Naive thymus-derived CD4-positive, alpha-beta T cell (primary cell): ENCODE measurements at regions of chr2 and their contacts with region 1.

Region 1: DNA sequence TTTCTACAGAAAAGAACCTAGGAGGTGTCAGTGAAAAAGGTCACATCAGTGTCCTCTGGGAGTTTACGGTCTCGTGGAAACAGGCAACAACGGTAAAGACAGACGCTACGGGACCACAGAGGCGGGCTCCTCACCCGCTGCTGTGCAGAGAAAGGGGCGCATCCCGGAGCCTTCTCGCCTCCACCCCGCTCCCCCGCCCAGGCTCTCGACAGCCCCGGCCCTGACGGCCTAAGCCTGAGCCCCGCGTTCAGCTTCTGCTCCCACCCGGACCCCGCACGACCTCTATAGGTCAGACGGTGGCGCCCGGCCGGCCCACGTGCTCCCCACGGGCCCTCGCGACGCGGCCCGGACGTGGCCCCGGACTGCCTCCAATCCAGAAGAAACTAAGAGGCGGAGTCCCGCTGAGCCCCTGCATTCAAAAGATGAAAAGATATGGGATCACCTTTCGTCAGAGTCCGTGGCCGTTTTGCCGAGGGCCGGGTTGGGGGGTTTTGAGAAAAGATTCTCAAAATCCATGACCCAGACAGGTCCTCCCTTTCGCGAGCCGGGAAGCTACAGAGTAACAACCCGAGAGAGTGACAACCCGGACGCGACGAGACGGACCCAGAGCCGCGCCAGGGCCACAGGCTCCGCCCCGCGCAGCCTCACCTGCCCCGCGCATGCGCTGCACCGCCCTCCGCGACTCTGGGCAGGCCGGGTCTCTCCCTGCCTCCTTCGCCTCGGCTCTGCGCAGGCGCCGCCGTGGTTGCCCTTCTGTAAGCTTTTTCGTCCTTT is at the start of gene ZC3H8:
- DNase-seq: peak; percentile 92 to 98 (median 97)
- ATAC-seq: peak; percentile 95
- H3K4me3 ChIP-seq: peak within 1 kb of the TSS; percentile 74
- H3K4me3 Mint-ChIP-seq: peak within 1 kb of the TSS in 9 of 10 donors; percentile 84 to 92 (median 90)
- H3K27ac ChIP-seq: peak within 1 kb of the TSS; percentile 90
- H3K27ac Mint-ChIP-seq: peak within 1 kb of the TSS; percentile 80 to 97 (median 94)
- H3K4me1 ChIP-seq: peaks cover 13 to 19% of the 10 kb centered on the region in 2 donors
- H3K4me1 Mint-ChIP-seq: peaks cover 5 to 32% (median 15%) of the 10 kb centered on the region in 7 donors
- H3K27me3 ChIP-seq: no peaks in the 10 kb centered on the region
- H3K27me3 Mint-ChIP-seq: peaks cover 0 to 3% (median 0%) of the 10 kb centered on the region in 5 donors
- total RNA-seq, gene ZC3H8: 8.8 to 23.6 (median 17.2) TPM

Region 2: DNA sequence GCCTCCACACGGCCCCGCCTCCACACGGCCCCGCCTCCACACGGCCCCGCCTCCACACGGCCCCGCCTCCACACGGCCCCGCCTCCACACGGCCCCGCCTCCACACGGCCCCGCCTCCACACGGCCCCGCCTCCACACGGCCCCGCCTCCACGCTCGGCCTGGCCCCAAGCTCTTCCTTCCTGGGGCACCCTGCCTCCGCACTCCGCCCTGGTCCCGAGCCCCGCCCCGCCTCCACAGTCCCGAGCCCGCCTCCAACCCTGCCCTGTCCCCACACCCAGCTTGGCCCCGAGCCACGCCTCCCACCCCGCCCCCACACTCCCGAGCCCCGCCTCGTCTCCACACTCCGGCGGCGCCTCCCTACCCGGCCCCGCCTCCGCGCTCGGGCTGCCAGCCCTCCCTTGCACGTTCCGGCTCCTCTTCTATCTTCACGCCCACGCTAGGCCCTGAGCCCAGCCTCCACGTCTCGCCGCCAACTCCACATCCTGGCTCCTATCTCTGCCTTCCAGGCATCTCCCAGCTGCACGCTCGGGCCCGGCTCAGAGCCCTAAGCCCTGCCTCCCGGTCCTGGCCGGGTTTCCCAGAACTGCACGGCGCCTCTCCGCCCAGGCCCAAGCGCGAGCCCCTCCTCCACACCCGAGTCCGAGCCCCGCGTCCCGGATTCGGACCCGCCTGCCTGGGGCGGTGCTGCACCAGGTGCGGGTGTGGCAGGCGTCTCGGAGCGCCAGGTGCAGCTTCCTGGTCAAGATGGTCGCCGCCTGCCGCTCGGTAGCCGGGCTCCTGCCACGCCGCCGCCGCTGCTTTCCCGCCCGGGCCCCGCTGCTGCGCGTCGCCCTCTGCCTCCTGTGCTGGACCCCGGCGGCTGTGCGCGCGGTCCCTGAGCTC is 199.6 kb before region 1 on chr2 and contains the start of gene TMEM87B:
- CTCF ChIA-PET with region 1: no interaction called
- POLR2A ChIA-PET with region 1: interaction called, 8 read pairs
- intact Hi-C with region 1: loop called (anchors 1 kb)
- DNase-seq: peak; percentile 90 to 98 (median 96)
- ATAC-seq: peak; percentile 80
- H3K4me3 ChIP-seq: peak within 1 kb of the TSS; percentile 85
- H3K4me3 Mint-ChIP-seq: peak within 1 kb of the TSS; percentile 80 to 100 (median 95)
- H3K27ac ChIP-seq: peak within 1 kb of the TSS; percentile 82
- H3K27ac Mint-ChIP-seq: peak within 1 kb of the TSS; percentile 92 to 100 (median 98)
- H3K4me1 ChIP-seq: peaks cover 16 to 19% of the 10 kb centered on the region in 2 donors
- H3K4me1 Mint-ChIP-seq: peaks cover 33 to 48% (median 42%) of the 10 kb centered on the region in 7 donors
- H3K27me3 ChIP-seq: no peaks in the 10 kb centered on the region
- H3K27me3 Mint-ChIP-seq: peaks cover 0 to 2% (median 0%) of the 10 kb centered on the region in 5 donors
- total RNA-seq, gene TMEM87B: 14.0 to 26.9 (median 17.4) TPM

Region 3: DNA sequence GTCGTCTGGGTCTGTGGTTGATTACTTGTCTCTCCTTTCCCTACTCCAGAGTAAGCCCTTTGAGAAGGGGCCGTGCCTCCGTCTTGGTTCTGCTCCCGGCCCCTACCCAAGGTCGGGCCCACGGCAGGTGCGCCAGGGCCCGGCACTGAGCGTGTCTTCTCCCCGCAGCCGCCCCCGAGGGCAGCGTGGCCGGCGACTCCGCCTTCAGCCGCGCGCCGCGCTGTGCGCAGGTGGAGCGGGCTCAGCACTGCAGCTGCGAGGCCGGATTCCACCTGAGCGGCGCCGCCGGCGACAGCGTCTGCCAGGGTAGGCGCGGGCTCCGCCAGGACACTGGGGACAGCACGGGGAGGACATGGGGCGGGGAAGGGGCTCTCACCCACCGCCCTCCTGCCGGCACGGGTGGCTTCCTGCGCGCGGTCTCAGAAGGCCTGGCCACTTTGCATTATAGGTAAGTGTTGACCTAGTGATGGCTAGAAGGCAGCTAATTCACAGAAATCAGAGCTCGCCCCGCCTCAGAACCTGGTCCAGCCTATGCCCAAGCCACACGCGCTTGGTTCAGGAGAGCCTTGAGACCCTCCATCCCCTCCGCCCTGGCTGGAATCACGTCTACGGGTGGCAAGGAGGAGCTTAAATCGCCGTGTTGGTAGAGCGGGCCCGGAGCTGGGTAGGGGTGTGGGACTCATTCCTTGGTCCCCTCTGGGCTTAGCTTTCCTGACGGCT is 72.9 kb before region 1 on chr2:
- CTCF ChIA-PET with region 1: interaction called, 4 read pairs
- POLR2A ChIA-PET with region 1: interaction called, 69 read pairs
- intact Hi-C with region 1: loop called in 1 of 2 experiments (anchors 1 kb)
- DNase-seq: peak; percentile 53 to 76 (median 71)
- ATAC-seq: peak; percentile 89
- H3K4me3 ChIP-seq: peak overlapping the region; percentile 71
- H3K4me3 Mint-ChIP-seq: peak overlapping the region; percentile 85 to 94 (median 90)
- H3K27ac ChIP-seq: peak overlapping the region; percentile 89
- H3K27ac Mint-ChIP-seq: peak overlapping the region; percentile 87 to 99 (median 96)
- H3K4me1 ChIP-seq: peaks cover 0 to 32% of the 10 kb centered on the region in 2 donors
- H3K4me1 Mint-ChIP-seq: peaks cover 28 to 71% (median 63%) of the 10 kb centered on the region in 7 donors
- H3K27me3 ChIP-seq: no peaks in the 10 kb centered on the region
- H3K27me3 Mint-ChIP-seq: peaks cover 0 to 11% (median 0%) of the 10 kb centered on the region in 5 donors

Region 4: GRCh38 chr2:112242384-112242783 is 12.3 kb before region 1 on chr2:
- CTCF ChIA-PET with region 1: no interaction called
- POLR2A ChIA-PET with region 1: interaction called, 12 read pairs
- intact Hi-C with region 1: loop called in 1 of 2 experiments (anchors 1 kb)
- DNase-seq: peak in 6 of 9 donors; percentile 14 to 39 (median 30)
- ATAC-seq: peak; percentile 53
- H3K4me3 ChIP-seq: no peak overlapping the region
- H3K4me3 Mint-ChIP-seq: peak overlapping the region in 8 of 10 donors; percentile 41 to 76 (median 60)
- H3K27ac ChIP-seq: peak overlapping the region; percentile 34
- H3K27ac Mint-ChIP-seq: peak overlapping the region in 8 of 9 donors; percentile 59 to 85 (median 76)
- H3K4me1 ChIP-seq: peaks cover 0 to 23% of the 10 kb centered on the region in 2 donors
- H3K4me1 Mint-ChIP-seq: peaks cover 13 to 59% (median 57%) of the 10 kb centered on the region in 7 donors
- H3K27me3 ChIP-seq: no peaks in the 10 kb centered on the region
- H3K27me3 Mint-ChIP-seq: no peaks in the 10 kb centered on the region

Region 5: DNA sequence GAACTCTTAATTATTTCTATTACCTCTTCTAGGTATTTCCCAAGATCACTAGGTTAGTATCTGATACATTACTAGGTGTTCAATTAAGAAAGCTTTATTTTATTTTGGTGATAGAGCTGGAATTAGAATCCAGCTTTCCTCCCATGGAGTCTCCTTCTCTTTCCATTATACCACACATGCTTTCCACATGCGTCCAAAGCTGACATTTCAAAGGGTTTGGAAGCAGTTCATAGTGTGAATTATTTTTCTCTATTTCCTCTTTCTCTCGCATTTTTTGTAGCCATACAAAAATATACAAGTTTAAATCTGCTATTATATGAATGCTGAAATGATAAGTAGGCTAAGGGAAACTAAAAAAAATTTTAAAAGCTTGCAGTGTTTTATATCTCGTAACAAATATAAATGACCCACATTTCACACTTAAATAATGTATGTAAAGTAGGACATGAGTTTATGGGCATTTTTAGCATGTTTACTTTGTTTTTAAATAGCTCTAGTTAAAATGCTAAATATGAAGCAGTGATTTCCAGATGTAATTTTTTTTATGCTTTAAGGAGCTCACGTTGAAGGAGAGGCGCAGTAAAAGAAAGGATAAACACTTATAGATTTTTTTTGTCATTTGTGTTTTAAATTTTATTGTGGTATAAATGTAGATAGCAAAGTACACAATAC is 40.9 kb after region 1 on chr2:
- CTCF ChIA-PET with region 1: no interaction called
- POLR2A ChIA-PET with region 1: no interaction called
- intact Hi-C with region 1: loop called in 1 of 2 experiments (anchors 5 kb)
- DNase-seq: no peak
- ATAC-seq: no peak
- H3K4me3 ChIP-seq: no peak overlapping the region
- H3K4me3 Mint-ChIP-seq: no peak overlapping the region
- H3K27ac ChIP-seq: no peak overlapping the region
- H3K27ac Mint-ChIP-seq: no peak overlapping the region
- H3K4me1 ChIP-seq: no peaks in the 10 kb centered on the region
- H3K4me1 Mint-ChIP-seq: peaks cover under 1 to 36% (median 19%) of the 10 kb centered on the region in 7 donors
- H3K27me3 ChIP-seq: no peaks in the 10 kb centered on the region
- H3K27me3 Mint-ChIP-seq: peaks cover 0 to 2% (median 0%) of the 10 kb centered on the region in 5 donors

Region 6: DNA sequence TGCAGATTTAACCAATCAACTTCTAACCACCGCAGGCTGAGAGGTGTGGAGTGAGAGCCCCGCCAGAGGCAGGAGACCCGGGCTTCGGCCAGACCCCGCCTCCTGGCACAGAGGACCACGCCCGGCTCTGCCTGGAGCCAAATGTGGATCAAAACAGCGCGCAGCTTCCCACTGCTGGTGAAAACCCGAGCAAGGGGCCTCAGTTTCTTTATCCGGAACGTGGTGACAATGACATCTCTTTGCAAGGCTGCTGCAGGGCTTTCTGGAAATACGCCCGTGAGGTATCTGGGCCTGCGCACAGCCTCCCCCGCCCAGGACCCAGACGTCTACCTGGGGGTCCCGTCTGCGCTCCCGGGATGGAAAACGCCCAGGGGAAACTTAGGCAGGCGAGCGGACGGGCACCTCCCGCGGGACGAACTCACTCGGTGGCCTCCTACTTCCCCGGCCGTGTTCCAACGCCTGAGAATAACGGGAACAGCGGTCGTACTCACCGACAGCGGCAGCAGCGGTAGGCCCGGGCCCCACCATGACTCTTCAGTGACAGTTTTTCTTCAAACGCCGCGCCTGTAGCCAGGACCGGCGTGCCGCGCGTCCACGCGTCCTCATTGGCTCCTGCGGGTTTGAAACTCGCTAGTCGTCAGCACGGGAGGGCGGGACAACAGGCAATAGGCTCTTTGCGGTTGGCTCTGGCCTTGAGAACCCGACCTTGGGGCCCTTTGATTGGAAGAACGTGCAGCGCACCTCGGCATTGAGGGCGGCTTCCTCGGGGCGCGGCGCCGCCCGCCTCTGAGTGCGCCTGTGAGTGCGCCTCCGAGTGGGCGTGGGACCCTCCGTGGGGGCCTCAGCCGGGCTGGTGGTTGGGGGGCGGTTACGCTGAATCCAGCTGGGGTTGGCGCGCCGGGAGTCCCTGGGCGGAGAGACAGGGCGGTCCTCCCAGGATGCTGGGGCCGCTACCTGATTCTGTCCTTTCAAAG is 509.7 kb after region 1 on chr2 and contains the start of gene CKAP2L:
- CTCF ChIA-PET with region 1: no interaction called
- POLR2A ChIA-PET with region 1: no interaction called
- intact Hi-C with region 1: loop called in 1 of 2 experiments (anchors 10 kb)
- DNase-seq: peak; percentile 85 to 97 (median 94)
- ATAC-seq: peak; percentile 99
- H3K4me3 ChIP-seq: peak within 1 kb of the TSS; percentile 82
- H3K4me3 Mint-ChIP-seq: peak within 1 kb of the TSS; percentile 90 to 97 (median 92)
- H3K27ac ChIP-seq: peak within 1 kb of the TSS; percentile 65
- H3K27ac Mint-ChIP-seq: peak within 1 kb of the TSS; percentile 29 to 95 (median 71)
- H3K4me1 ChIP-seq: peaks cover 12 to 16% of the 10 kb centered on the region in 2 donors
- H3K4me1 Mint-ChIP-seq: peaks cover 15 to 61% (median 30%) of the 10 kb centered on the region in 7 donors
- H3K27me3 ChIP-seq: no peaks in the 10 kb centered on the region
- H3K27me3 Mint-ChIP-seq: no peaks in the 10 kb centered on the region
- total RNA-seq, gene CKAP2L: 0.69 to 36.2 (median 2.4) TPM in 3 of 5 experiments, not detected in the others